Prostate gland (tissue), 2 donors: ENCODE measurements at regions of chr9 and their contacts with region 1.

Region 1: GRCh38 chr9:115204904-115205453 is 87.0 kb upstream of the TNC start:
- DNase-seq: no peak
- H3K4me3 ChIP-seq: no peak overlapping the region
- H3K27ac ChIP-seq: no peak overlapping the region
- H3K4me1 ChIP-seq: no peaks in the 10 kb centered on the region
- H3K27me3 ChIP-seq: no peaks in the 10 kb centered on the region
- CTCF ChIP-seq: no peak
- POLR2A ChIP-seq: no peak

Region 2: GRCh38 chr9:115013998-115014397 is 191.0 kb before region 1 on chr9:
- intact Hi-C with region 1: no loop called
- DNase-seq: peak; percentile 56
- H3K4me3 ChIP-seq: no peak overlapping the region
- H3K27ac ChIP-seq: no peak overlapping the region
- H3K4me1 ChIP-seq: no peaks in the 10 kb centered on the region
- H3K27me3 ChIP-seq: no peaks in the 10 kb centered on the region
- CTCF ChIP-seq: peak; percentile 60 to 88 (median 80)
- POLR2A ChIP-seq: no peak

Region 3: GRCh38 chr9:115046824-115047223 is 158.2 kb before region 1 on chr9:
- intact Hi-C with region 1: no loop called
- DNase-seq: no peak
- H3K4me3 ChIP-seq: no peak overlapping the region
- H3K27ac ChIP-seq: no peak overlapping the region
- H3K4me1 ChIP-seq: no peaks in the 10 kb centered on the region
- H3K27me3 ChIP-seq: no peaks in the 10 kb centered on the region
- CTCF ChIP-seq: no peak
- POLR2A ChIP-seq: no peak

Region 4: GRCh38 chr9:115057559-115057958 is 147.4 kb before region 1 on chr9:
- intact Hi-C with region 1: no loop called
- DNase-seq: no peak
- H3K4me3 ChIP-seq: no peak overlapping the region
- H3K27ac ChIP-seq: no peak overlapping the region
- H3K4me1 ChIP-seq: no peaks in the 10 kb centered on the region
- H3K27me3 ChIP-seq: no peaks in the 10 kb centered on the region
- CTCF ChIP-seq: no peak
- POLR2A ChIP-seq: no peak

Region 5: GRCh38 chr9:115262477-115262876 is 57.5 kb after region 1 on chr9:
- intact Hi-C with region 1: loop called (anchors 10 kb)
- DNase-seq: peak; percentile 96
- H3K4me3 ChIP-seq: no peak overlapping the region
- H3K27ac ChIP-seq: no peak overlapping the region
- H3K4me1 ChIP-seq: no peaks in the 10 kb centered on the region
- H3K27me3 ChIP-seq: no peaks in the 10 kb centered on the region
- CTCF ChIP-seq: no peak
- POLR2A ChIP-seq: no peak

Region 6: DNA sequence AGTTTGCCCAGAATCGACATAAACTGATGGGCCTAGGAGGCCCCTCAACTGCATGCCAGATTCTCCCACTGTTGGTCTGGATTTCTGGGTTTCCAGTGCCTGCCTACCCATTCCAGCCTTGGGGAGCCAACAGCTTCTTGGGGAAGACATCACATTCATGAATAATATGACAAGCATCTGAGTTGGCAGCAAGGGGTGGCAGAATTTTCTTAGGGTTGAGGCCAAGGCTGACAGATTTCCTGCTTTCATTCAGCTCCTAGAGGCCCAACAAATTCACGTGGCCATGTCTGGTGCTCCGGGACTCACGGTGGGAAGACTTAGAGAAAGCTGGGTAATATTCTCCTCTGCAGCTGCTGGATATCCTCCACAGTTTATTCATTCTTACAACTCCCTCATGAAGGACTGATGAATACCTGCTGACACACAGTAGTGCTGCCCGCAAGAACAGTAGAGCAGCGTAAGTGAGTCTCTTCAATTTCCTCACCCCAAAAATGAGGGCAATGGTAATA is 218.0 kb after region 1 on chr9:
- intact Hi-C with region 1: no loop called
- DNase-seq: no peak
- H3K4me3 ChIP-seq: no peak overlapping the region
- H3K27ac ChIP-seq: no peak overlapping the region
- H3K4me1 ChIP-seq: no peaks in the 10 kb centered on the region
- H3K27me3 ChIP-seq: no peaks in the 10 kb centered on the region
- CTCF ChIP-seq: no peak
- POLR2A ChIP-seq: no peak